MCF 10A (cell line): ENCODE measurements at regions of chr17 and their contacts with region 1.

Region 1: DNA sequence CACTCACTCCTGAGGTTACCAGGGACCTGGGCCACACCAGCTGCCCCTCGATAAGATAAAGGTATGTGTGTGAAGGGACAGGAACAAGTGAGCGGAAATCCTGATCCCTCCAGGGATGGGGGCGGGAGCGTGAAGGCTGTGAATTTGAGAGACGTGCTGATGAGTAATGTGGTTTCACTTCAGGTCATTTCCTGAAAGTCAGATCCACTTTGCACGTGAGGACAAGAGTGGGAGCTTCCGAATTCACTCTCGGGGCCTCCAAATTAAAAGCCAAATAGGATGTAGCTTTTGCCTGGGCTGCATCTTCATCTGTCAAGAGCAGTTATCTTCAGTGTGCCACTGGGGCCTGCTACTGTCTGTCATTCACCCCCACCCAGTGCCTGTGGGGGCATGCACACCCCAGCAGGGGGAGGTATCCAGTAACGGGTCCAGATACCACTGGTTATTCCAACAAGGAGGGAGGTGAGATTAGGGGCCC is 87.4 kb upstream of the LHX1 start:
- DNase-seq: peak; percentile 91
- H3K4me3 Mint-ChIP-seq: no peak overlapping the region
- H3K27ac Mint-ChIP-seq: peak overlapping the region; percentile 94
- H3K4me1 Mint-ChIP-seq: peaks cover 18% of the 10 kb centered on the region
- H3K27me3 Mint-ChIP-seq: no peaks in the 10 kb centered on the region
- CTCF ChIP-seq: no peak

Region 2: DNA sequence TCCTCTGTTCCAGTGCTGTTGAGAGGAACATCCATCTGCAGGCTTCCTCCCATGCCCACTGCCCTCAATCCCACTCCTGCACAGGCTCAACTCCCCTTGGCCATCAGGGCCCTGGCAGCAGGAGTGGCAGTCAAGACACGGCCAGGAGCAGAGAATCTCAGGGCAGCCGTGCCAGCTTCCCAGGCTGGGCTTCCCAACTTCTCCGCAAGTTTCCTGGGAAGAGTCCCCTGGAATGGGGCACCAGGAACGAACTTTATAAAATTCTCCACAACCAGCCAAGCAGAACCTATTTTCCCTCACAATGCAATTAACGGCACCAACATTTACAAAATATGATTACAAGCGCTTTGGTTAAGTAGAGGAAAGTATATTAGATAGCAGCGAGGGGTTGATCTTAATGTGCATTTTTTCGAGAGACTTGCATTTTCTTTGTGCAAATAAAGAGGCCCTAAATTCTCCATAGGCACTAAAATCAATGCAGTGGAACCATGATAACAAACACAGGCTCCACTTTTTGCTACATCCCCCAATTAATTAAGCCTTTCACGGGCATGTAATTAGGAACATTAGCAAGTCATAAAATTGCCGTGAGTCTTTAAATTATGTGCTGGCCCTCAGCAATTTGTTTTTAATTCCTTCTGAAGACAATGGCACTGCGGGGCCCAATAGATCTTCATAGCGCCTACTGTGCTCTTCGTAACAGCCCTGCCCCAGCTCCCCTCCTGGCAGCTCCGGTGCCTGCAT is 12.5 kb before region 1 on chr17:
- CTCF ChIA-PET with region 1: no interaction called
- POLR2A ChIA-PET with region 1: no interaction called
- intact Hi-C with region 1: no loop called
- DNase-seq: no peak
- H3K4me3 Mint-ChIP-seq: no peak overlapping the region
- H3K27ac Mint-ChIP-seq: no peak overlapping the region
- H3K4me1 Mint-ChIP-seq: no peaks in the 10 kb centered on the region
- H3K27me3 Mint-ChIP-seq: no peaks in the 10 kb centered on the region
- CTCF ChIP-seq: no peak

Region 3: DNA sequence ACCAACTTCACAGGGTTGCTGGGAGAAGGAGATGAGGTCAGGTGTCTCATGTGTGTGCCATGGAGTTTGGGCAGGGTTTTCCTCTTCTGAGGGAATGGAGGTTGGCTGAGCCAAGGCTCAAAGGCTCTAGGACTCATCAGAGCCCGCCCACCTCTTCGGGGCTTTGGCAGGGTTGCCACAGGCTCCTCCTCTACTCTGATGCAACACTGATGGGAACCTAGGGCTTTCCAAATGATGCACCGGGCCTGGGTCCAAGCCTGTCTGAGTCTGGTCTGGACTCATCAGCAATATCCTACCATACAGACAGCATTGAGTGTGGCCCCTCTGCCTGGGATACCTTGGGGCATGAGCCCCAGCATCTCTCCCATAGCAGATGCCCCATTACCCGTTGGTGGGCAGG is 27.9 kb after region 1 on chr17:
- CTCF ChIA-PET with region 1: no interaction called
- POLR2A ChIA-PET with region 1: no interaction called
- intact Hi-C with region 1: no loop called
- DNase-seq: peak; percentile 92
- H3K4me3 Mint-ChIP-seq: no peak overlapping the region
- H3K27ac Mint-ChIP-seq: no peak overlapping the region
- H3K4me1 Mint-ChIP-seq: peaks cover 7% of the 10 kb centered on the region
- H3K27me3 Mint-ChIP-seq: no peaks in the 10 kb centered on the region
- CTCF ChIP-seq: no peak

Region 4: DNA sequence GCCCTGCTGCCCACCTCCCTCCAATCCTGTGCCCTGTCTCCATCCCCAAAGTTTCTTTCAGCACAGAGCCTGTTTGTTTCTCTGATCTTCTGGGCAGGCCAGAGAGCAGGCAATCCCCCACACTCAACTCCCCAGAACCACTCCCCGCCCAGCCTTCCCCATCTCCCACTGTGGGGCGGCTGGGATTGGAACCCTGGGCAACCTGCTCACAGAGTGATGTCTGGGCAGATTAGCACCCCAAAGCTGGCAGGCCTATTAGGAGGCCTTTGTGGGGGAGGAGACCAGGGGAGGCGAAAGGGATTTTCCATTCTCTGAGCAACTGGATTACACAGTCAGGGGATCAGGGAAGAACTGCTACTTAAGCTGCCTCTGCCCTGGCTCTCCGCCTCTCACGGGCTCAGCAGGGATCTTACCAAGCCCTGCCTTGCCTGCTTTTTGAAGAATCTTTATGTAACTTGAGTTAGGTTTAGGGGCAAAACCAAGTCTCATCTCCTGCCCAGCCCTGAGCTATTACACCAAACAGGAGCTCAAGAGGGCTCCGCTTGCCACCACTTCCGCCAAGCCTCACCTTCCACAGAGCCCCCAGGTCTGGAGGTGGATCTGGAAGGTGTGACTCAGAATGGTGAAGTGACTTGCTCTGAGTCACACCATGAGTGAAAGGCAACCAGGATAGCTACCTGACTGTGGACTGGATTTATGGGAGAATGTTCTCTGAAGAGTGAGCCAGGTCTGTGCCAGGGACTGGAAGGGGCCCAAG is 71.4 kb after region 1 on chr17:
- CTCF ChIA-PET with region 1: no interaction called
- POLR2A ChIA-PET with region 1: no interaction called
- intact Hi-C with region 1: loop called (anchors 2 kb)
- DNase-seq: peak; percentile 95
- H3K4me3 Mint-ChIP-seq: peak overlapping the region; percentile 53
- H3K27ac Mint-ChIP-seq: peak overlapping the region; percentile 63
- H3K4me1 Mint-ChIP-seq: peaks cover 31% of the 10 kb centered on the region
- H3K27me3 Mint-ChIP-seq: no peaks in the 10 kb centered on the region
- CTCF ChIP-seq: no peak